Endothelial cell of umbilical vein (primary cell): ENCODE measurements at regions of chr7 and their contacts with region 1.

Region 1: DNA sequence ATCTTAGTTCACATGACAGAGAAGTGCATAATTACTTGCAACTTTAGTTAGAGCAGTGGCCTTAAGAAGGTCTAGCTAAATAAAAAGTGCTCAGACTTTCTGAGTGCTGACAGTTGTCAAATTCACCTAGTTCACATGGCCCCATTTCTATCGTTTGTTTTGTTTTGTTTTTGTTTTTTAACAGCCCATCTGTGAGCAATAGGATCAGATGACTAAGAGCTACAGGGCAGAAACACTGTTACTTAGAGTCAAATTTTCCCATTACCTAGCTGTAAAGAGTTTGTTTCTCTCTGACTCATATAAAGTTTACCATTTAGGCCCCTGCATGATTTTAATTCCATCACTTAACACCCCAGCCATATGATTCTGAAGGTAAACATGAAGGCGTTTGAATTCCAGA is 18.8 kb downstream of the CAV1 start:
- DNase-seq: peak; percentile 69
- H3K4me3 ChIP-seq: no peak overlapping the region
- H3K27ac ChIP-seq: peak overlapping the region; percentile 26
- H3K4me1 ChIP-seq: peaks cover 18% of the 10 kb centered on the region
- H3K27me3 ChIP-seq: no peaks in the 10 kb centered on the region
- CTCF ChIP-seq: no peak
- POLR2A ChIP-seq: no peak

Region 2: DNA sequence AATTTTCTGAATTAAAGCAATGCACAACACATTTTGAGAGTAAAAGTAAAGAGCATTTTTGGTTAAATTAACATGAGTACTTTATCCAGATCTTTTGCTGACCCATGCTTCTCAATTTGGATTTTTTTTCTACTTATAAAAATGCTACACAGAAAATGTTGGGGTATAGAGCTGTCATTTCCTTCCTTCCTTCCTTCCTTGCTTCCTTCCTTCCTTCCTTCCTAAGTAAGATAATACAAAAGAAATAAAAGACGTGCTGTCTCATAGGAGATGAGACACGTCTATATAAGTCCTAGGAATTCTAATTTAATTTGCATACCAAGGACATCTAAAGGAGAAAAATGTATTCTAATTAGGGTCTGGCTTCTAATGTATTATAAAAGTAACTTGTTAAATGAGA is 75.1 kb before region 1 on chr7:
- CTCF ChIA-PET with region 1: no interaction called
- POLR2A ChIA-PET with region 1: no interaction called
- dilution Hi-C with region 1: no loop called
- intact Hi-C with region 1: no loop called
- DNase-seq: no peak
- H3K4me3 ChIP-seq: no peak overlapping the region
- H3K27ac ChIP-seq: no peak overlapping the region
- H3K4me1 ChIP-seq: peaks cover 26% of the 10 kb centered on the region
- H3K27me3 ChIP-seq: no peaks in the 10 kb centered on the region
- CTCF ChIP-seq: no peak
- POLR2A ChIP-seq: no peak

Region 3: DNA sequence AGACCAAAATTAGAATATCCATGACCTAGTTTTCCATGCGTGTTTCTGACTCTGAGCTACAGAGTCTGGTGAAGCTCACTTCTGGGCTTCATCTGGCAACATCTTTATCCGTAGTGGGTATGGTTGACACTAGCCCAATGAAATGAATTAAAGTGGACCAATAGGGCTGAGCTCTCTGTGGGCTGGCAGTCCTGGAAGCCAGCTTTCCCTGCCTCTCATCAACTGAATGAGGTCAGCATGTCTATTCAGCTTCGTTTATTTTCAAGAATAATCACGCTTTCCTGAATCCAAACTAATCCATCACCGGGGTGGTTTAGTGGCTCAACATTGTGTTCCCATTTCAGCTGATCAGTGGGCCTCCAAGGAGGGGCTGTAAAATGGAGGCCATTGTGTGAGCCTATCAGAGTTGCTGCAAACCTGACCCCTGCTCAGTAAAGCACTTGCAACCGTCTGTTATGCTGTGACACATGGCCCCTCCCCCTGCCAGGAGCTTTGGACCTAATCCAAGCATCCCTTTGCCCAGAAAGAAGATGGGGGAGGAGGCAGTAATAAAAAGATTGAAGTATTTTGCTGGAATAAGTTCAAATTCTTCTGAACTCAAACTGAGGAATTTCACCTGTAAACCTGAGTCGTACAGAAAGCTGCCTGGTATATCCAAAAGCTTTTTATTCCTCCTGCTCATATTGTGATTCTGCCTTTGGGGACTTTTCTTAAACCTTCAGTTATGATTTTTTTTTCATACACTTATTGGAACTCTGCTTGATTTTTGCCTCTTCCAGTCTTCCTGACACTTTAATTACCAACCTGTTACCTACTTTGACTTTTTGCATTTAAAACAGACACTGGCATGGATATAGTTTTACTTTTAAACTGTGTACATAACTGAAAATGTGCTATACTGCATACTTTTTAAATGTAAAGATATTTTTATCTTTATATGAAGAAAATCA is 16.6 kb after region 1 on chr7:
- CTCF ChIA-PET with region 1: interaction called, 3 read pairs
- POLR2A ChIA-PET with region 1: interaction called, 3 read pairs
- dilution Hi-C with region 1: no loop called
- intact Hi-C with region 1: loop called (anchors 2 kb)
- DNase-seq: no peak
- H3K4me3 ChIP-seq: no peak overlapping the region
- H3K27ac ChIP-seq: no peak overlapping the region
- H3K4me1 ChIP-seq: peaks cover 4% of the 10 kb centered on the region
- H3K27me3 ChIP-seq: no peaks in the 10 kb centered on the region
- CTCF ChIP-seq: no peak
- POLR2A ChIP-seq: no peak

Region 4: GRCh38 chr7:116576350-116577319 is 33.0 kb after region 1 on chr7:
- CTCF ChIA-PET with region 1: interaction called, 3 read pairs
- POLR2A ChIA-PET with region 1: no interaction called
- dilution Hi-C with region 1: no loop called
- intact Hi-C with region 1: loop called (anchors 2 kb)
- DNase-seq: peak; percentile 98
- H3K4me3 ChIP-seq: peak overlapping the region in 1 of 3 experiments; percentile 10
- H3K27ac ChIP-seq: peak overlapping the region; percentile 95
- H3K4me1 ChIP-seq: peaks cover 51% of the 10 kb centered on the region
- H3K27me3 ChIP-seq: no peaks in the 10 kb centered on the region
- CTCF ChIP-seq: no peak
- POLR2A ChIP-seq: peak; percentile 45

Region 5: GRCh38 chr7:116582806-116583444 is 39.3 kb after region 1 on chr7:
- CTCF ChIA-PET with region 1: interaction called, 20 read pairs
- POLR2A ChIA-PET with region 1: no interaction called
- dilution Hi-C with region 1: no loop called
- intact Hi-C with region 1: no loop called
- DNase-seq: peak; percentile 32
- H3K4me3 ChIP-seq: no peak overlapping the region
- H3K27ac ChIP-seq: no peak overlapping the region
- H3K4me1 ChIP-seq: peaks cover 25% of the 10 kb centered on the region
- H3K27me3 ChIP-seq: no peaks in the 10 kb centered on the region
- CTCF ChIP-seq: no peak
- POLR2A ChIP-seq: no peak